AG04450 (cell line): ENCODE measurements at regions of chr4 and their contacts with region 1.

Region 1: GRCh38 chr4:89640620-89641366 is 196.2 kb downstream of the SNCA start:
- DNase-seq: peak; percentile 23
- H3K4me3 ChIP-seq: peak overlapping the region; percentile 41
- H3K27ac ChIP-seq: no peak overlapping the region
- H3K27me3 ChIP-seq: no peaks in the 10 kb centered on the region
- CTCF ChIP-seq: peak; percentile 83

Region 2: GRCh38 chr4:89482248-89482647 is 158.5 kb before region 1 on chr4:
- CTCF ChIA-PET with region 1: interaction called, 20 read pairs
- POLR2A ChIA-PET with region 1: no interaction called
- DNase-seq: no peak
- H3K4me3 ChIP-seq: no peak overlapping the region
- H3K27ac ChIP-seq: no peak overlapping the region
- H3K27me3 ChIP-seq: no peaks in the 10 kb centered on the region
- CTCF ChIP-seq: peak; percentile 36

Region 3: GRCh38 chr4:89625599-89626298 is 15.0 kb before region 1 on chr4:
- CTCF ChIA-PET with region 1: interaction called, 10 read pairs
- POLR2A ChIA-PET with region 1: no interaction called
- DNase-seq: no peak
- H3K4me3 ChIP-seq: no peak overlapping the region
- H3K27ac ChIP-seq: no peak overlapping the region
- H3K27me3 ChIP-seq: no peaks in the 10 kb centered on the region
- CTCF ChIP-seq: no peak

Region 4: GRCh38 chr4:89653012-89653411 is 12.2 kb after region 1 on chr4:
- CTCF ChIA-PET with region 1: interaction called, 35 read pairs
- POLR2A ChIA-PET with region 1: no interaction called
- DNase-seq: no peak
- H3K4me3 ChIP-seq: no peak overlapping the region
- H3K27ac ChIP-seq: no peak overlapping the region
- H3K27me3 ChIP-seq: no peaks in the 10 kb centered on the region
- CTCF ChIP-seq: no peak

Region 5: GRCh38 chr4:89868999-89869589 is 228.3 kb after region 1 on chr4:
- CTCF ChIA-PET with region 1: interaction called, 41 read pairs
- POLR2A ChIA-PET with region 1: no interaction called
- DNase-seq: no peak
- H3K4me3 ChIP-seq: no peak overlapping the region
- H3K27ac ChIP-seq: no peak overlapping the region
- H3K27me3 ChIP-seq: no peaks in the 10 kb centered on the region
- CTCF ChIP-seq: peak; percentile 55